HEK293T (cell line): ENCODE measurements at regions of chr3 and their contacts with region 1.

Region 1: GRCh38 chr3:139329345-139329850 is 14.4 kb upstream of the MRPS22 start:
- DNase-seq: peak; percentile 93

Region 2: GRCh38 chr3:139111392-139112229 is 217.8 kb before region 1 on chr3:
- CTCF ChIA-PET with region 1: interaction called, 29 read pairs
- POLR2A ChIA-PET with region 1: no interaction called
- DNase-seq: peak; percentile 67